ENCODE measurements at regions of chr15 and their contacts with region 1.

Region 1: DNA sequence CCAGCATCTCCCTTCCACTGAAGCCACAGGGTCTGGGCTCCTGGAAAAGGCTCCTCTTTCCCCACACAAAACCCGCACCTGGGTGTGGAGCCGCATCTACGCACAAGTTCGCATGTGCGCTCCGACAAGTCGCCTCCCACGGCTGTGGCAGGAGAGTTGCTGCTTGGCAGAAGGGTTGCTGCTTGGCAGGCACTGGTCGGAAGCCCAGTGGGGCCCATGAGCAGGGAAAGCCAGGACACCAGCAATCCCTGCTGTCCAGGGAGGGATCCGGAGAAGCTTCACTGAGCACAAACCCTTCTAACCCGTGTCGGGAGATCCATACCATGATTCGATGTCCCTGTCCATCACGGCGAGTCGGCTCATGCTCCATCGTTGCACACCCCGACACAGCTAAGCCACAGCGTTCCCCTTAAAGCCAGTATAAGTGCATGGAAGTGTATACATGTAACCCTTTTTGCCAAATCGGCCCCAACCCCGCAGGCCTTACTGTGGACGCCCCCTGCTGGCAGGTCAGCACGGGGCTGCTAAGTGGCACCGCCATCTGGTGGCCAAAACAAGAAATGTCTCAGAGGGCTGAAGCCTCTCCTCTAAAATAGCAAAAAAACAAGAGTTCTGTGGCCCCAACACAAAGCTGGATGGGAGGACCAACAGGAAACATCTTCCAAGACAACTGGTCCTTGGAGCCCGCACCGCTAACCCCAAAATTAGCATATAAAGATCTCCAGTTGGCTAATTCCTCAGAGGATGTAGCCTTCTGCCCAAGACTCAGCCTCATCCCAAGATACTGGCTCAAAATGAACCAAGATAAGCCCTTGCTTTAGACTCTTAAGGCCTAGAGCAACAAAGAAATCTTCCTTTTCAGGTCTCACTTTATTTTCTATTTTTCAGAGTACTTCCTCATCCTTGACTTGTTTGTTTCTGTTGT is 8.3 kb downstream of the ANKRD63 start:
- DNase-seq: peak; percentile 89
- H3K4me3 ChIP-seq: no peak overlapping the region
- H3K27ac ChIP-seq: no peak overlapping the region
- H3K4me1 ChIP-seq: peaks cover 25% of the 10 kb centered on the region
- H3K27me3 ChIP-seq: no peaks in the 10 kb centered on the region
- CTCF ChIP-seq: peak; percentile 100

Region 2: DNA sequence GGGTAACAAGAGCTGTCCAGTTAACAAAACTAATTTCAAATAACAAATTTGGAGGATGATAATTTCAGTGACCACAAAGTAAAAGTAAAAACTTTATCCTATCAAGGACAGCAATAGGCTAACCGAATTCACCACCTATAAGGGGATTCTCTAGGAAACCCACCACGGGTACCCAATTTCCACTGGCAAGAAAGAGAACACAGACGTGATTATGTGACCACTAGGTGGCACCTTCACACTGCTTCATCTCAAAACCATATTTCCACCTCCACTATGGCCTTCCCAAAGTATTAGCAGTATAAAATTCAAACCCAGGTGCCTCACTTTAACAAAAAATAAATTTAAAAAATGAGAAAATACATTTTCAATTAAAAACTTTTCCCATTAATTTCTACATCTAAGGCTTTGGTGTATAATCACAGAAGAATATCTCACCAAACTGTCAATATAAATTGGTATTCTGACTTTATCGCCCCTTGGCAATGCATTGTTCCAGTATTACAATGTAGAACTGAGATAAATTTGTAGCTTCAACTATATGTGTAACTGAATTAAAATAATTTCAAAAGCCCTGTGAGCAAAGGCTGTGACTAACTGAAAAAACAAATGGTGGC is 588.5 kb before region 1 on chr15:
- CTCF ChIA-PET with region 1: no interaction called
- POLR2A ChIA-PET with region 1: no interaction called
- intact Hi-C with region 1: loop called (anchors 10 kb)
- DNase-seq: peak; percentile 60
- H3K4me3 ChIP-seq: no peak overlapping the region
- H3K27ac ChIP-seq: no peak overlapping the region
- H3K4me1 ChIP-seq: no peaks in the 10 kb centered on the region
- H3K27me3 ChIP-seq: no peaks in the 10 kb centered on the region
- CTCF ChIP-seq: peak; percentile 84

Region 3: DNA sequence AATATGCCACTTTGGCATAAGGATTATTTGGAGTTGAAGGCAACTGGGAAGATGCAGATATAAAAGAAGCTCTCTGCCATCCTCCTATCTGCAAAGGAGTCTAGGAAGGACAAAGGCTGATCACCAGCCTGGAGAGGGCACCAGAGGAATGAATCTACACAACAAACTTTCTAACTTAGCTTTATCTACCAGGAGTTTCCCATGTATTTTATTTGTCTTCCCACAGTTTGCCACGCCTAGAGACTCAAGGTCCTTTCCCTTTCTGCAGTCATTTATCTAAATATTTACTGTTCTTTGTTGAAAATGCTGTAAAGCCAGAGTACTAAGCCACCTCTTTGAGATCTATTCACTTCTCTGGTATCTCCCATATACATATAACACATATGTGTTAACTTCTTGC is 386.8 kb before region 1 on chr15:
- CTCF ChIA-PET with region 1: interaction called, 5 read pairs
- POLR2A ChIA-PET with region 1: no interaction called
- intact Hi-C with region 1: loop called (anchors 10 kb)
- DNase-seq: peak; percentile 65
- H3K4me3 ChIP-seq: no peak overlapping the region
- H3K27ac ChIP-seq: no peak overlapping the region
- H3K4me1 ChIP-seq: peaks cover 6% of the 10 kb centered on the region
- H3K27me3 ChIP-seq: no peaks in the 10 kb centered on the region
- CTCF ChIP-seq: peak; percentile 55

Region 4: GRCh38 chr15:40029979-40030893 is 244.4 kb before region 1 on chr15:
- CTCF ChIA-PET with region 1: no interaction called
- POLR2A ChIA-PET with region 1: no interaction called
- intact Hi-C with region 1: no loop called
- DNase-seq: peak; percentile 47
- H3K4me3 ChIP-seq: no peak overlapping the region
- H3K27ac ChIP-seq: no peak overlapping the region
- H3K4me1 ChIP-seq: no peaks in the 10 kb centered on the region
- H3K27me3 ChIP-seq: no peaks in the 10 kb centered on the region
- CTCF ChIP-seq: peak; percentile 83

Region 5: DNA sequence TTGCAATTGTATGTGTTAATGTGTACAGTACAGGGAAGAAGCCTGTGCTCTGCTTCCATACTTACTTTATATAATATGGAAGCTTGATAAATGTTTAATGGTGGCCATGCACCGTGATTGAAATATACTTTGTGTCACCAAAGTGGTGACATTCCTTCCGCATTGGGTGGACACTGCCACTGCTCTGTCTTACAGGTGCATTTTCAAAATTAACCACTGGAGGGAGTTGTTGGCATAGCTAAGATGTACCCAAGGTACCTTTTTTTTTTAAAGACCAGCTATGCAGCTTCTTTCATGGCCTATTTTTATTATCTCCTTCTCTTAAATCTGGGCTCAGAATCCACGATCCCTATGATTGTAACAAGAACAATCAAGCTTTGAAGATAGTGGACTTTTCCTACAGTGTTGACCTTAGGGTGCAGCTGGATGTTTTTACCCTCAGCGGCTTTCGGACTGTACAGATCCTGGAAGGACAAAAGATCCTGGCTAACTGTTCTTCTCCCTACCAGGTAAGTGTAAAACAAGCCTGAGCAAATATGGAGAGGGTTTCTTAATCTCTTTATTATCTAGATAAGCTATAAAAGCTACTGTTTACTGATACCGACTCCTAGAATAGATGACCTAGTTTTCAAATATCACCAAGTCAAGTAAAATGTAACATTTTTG is 57.3 kb before region 1 on chr15:
- CTCF ChIA-PET with region 1: interaction called, 25 read pairs
- POLR2A ChIA-PET with region 1: no interaction called
- intact Hi-C with region 1: loop called (anchors 2 kb)
- DNase-seq: peak; percentile 78
- H3K4me3 ChIP-seq: no peak overlapping the region
- H3K27ac ChIP-seq: no peak overlapping the region
- H3K4me1 ChIP-seq: no peaks in the 10 kb centered on the region
- H3K27me3 ChIP-seq: no peaks in the 10 kb centered on the region
- CTCF ChIP-seq: peak; percentile 84

Region 6: GRCh38 chr15:40310001-40310959 is 35.7 kb after region 1 on chr15:
- CTCF ChIA-PET with region 1: interaction called, 9 read pairs
- POLR2A ChIA-PET with region 1: no interaction called
- intact Hi-C with region 1: loop called (anchors 1 kb)
- DNase-seq: peak; percentile 64
- H3K4me3 ChIP-seq: no peak overlapping the region
- H3K27ac ChIP-seq: no peak overlapping the region
- H3K4me1 ChIP-seq: peaks cover 11% of the 10 kb centered on the region
- H3K27me3 ChIP-seq: no peaks in the 10 kb centered on the region
- CTCF ChIP-seq: peak; percentile 76

Region 7: DNA sequence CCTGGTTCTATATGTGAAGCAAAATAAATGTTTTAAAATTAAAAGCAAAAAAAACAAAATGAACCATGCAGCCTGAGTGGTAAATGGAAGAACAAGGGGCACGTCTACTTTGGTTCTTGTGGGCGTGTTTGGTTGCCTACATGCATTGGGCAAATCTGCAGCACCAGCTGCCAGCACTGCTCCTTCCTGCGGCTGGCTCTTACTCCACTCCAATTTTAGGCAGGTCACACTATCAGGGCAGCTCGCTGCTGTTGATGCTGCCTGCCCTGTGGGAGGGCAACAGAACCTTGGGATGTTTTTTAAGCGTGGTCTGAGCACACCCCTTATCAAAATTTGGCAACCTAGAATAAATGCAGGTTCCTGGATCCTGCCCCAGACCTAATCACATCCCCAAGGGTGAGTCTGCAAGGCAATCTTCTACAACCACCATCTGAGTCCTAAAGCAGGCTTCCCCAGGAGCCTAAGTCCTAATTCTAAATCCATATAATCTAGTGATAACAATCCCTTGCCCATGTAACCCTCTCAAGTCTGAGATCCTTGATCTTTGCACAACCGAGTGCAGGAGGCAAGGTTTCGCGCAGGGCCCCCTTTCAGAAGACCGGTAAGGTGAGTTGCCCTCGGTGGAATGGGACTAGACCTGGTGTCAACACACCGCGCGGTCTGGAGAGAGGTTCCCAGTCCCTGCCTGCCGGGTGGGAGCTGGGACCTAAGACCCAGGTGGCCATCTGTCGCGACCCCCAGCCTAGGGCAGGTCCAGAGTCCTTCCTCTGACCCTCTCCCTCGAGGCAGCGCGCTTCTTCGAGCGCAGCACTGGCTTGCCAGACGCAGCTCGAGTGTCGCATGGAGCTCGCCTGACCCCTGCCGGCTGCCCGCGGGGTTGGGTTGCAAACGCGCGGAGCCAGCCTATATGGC is 146.9 kb after region 1 on chr15:
- CTCF ChIA-PET with region 1: interaction called, 12 read pairs
- POLR2A ChIA-PET with region 1: no interaction called
- intact Hi-C with region 1: loop called (anchors 2 kb)
- DNase-seq: peak; percentile 78
- H3K4me3 ChIP-seq: no peak overlapping the region
- H3K27ac ChIP-seq: no peak overlapping the region
- H3K4me1 ChIP-seq: no peaks in the 10 kb centered on the region
- H3K27me3 ChIP-seq: no peaks in the 10 kb centered on the region
- CTCF ChIP-seq: peak; percentile 92